ENCODE measurements at regions of chr7 and their contacts with region 1.

Region 1: DNA sequence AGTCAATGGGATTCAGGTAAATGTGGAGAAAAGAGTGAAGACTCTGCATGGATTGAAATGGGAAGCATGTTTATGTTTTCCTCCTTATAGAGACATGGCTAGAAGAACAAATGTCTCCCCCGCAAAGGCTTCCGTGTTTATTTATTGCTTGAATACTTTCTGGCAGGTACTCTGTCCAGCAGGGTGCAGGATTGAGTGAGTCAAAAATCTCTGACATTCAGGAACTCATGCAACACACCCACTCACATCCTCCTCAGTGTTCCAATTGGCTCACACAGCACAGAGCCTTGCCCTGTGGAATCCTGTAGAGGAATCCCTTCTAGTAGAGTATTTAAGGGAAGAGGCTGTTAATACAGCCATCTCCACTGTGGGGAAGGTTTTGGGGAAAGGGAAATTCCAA is 290.3 kb upstream of the VWC2 start:
- DNase-seq: no peak
- ATAC-seq: no peak
- H3K4me3 ChIP-seq: no peak overlapping the region
- H3K27ac ChIP-seq: no peak overlapping the region
- H3K4me1 ChIP-seq: no peaks in the 10 kb centered on the region
- H3K27me3 ChIP-seq: no peaks in the 10 kb centered on the region
- CTCF ChIP-seq: peak; percentile 11; the same call in 1 of the 2 replicates

Region 2: GRCh38 chr7:49433794-49434193 is 49.3 kb before region 1 on chr7:
- CTCF ChIA-PET with region 1: no interaction called
- POLR2A ChIA-PET with region 1: no interaction called
- in situ Hi-C with region 1: no loop called
- intact Hi-C with region 1: loop called (anchors 5 kb)
- DNase-seq: no peak
- ATAC-seq: no peak
- H3K4me3 ChIP-seq: no peak overlapping the region
- H3K27ac ChIP-seq: no peak overlapping the region
- H3K4me1 ChIP-seq: no peaks in the 10 kb centered on the region
- H3K27me3 ChIP-seq: no peaks in the 10 kb centered on the region
- CTCF ChIP-seq: no peak